Mucosa of descending colon (tissue), 3 donors: ENCODE measurements at regions of chr2 and their contacts with region 1.

Region 1: GRCh38 chr2:27086090-27086723 is 365 bp upstream of the KHK start:
- DNase-seq: peak; percentile 95 to 98 (median 96)
- ATAC-seq: peak; percentile 93
- H3K4me3 ChIP-seq: peak overlapping the region; percentile 28
- H3K4me1 ChIP-seq: peaks cover 30% of the 10 kb centered on the region
- CTCF ChIP-seq: peak; percentile 97

Region 2: GRCh38 chr2:27032495-27033252 is 53.5 kb before region 1 on chr2 and contains the start of gene TMEM214:
- intact Hi-C with region 1: loop called in 1 of 2 experiments (anchors 10 kb)
- DNase-seq: peak; percentile 92 to 94 (median 94)
- ATAC-seq: peak; percentile 98
- H3K4me3 ChIP-seq: peak within 1 kb of the TSS; percentile 93
- H3K4me1 ChIP-seq: peaks cover 14% of the 10 kb centered on the region
- CTCF ChIP-seq: no peak
- total RNA-seq, gene TMEM214: 78.9 to 93.3 (median 80.1) TPM